WTC11 (cell line): ENCODE measurements at regions of chr1 and their contacts with region 1.

Region 1: DNA sequence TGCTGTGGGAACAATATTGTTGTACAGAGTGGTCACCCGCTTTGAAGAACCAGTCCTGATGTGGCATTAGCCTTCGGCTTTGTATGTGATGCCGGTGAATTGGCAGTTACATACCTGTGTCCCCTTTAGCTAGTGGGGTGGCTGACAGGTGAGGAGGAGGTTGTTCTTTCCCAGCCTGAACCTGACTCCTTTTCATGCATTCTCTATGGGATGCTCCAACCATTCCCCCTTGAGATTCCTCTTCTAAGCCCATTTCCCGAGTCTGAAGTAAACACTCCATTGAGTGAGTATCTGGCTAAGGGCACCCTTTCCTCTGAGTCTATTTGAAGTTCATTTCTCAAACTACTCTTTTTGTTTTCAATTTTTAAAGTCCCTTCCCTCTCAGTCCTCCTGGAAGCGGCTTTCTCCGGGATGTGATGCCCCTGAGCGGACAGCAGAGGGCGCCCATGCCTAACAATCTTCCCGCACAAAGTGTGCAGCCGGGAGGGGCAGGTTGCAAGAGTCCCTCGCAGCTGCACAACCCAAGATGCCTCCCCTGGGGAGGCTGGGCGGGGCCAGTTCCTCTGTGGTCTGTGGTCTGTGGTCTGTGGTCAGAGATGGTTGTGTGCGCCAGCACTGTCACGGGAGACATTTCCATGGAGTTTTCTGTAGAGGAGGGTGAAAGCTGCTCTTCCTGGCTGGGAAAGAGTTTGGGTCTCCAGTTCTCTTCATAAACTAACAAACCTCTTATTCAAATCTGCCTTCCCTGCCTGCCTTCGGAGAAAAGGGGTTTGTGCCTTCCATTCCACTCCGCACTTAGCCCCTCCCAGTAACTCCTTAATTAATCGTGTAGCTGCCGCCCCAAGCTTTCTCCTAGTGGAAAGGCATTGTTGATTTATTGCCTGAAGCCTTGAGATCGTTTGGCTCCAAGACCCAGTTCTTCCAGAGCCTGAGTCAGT is 36.4 kb upstream of the LMX1A start:
- DNase-seq: peak; percentile 84
- ATAC-seq: peak; percentile 99
- H3K4me3 Mint-ChIP-seq: peak overlapping the region; percentile 64
- H3K27ac Mint-ChIP-seq: no peak overlapping the region
- H3K4me1 Mint-ChIP-seq: peaks cover 7% of the 10 kb centered on the region
- H3K27me3 Mint-ChIP-seq: peaks cover 24% of the 10 kb centered on the region
- CTCF ChIP-seq: peak; percentile 87

Region 2: GRCh38 chr1:165288350-165289148 is 104.4 kb before region 1 on chr1:
- CTCF ChIA-PET with region 1: no interaction called
- POLR2A ChIA-PET with region 1: no interaction called
- DNase-seq: no peak
- ATAC-seq: peak; percentile 40
- H3K4me3 Mint-ChIP-seq: no peak overlapping the region
- H3K27ac Mint-ChIP-seq: no peak overlapping the region
- H3K4me1 Mint-ChIP-seq: peaks cover 16% of the 10 kb centered on the region
- H3K27me3 Mint-ChIP-seq: no peaks in the 10 kb centered on the region; the same call in 1 of the 2 replicates
- CTCF ChIP-seq: no peak

Region 3: DNA sequence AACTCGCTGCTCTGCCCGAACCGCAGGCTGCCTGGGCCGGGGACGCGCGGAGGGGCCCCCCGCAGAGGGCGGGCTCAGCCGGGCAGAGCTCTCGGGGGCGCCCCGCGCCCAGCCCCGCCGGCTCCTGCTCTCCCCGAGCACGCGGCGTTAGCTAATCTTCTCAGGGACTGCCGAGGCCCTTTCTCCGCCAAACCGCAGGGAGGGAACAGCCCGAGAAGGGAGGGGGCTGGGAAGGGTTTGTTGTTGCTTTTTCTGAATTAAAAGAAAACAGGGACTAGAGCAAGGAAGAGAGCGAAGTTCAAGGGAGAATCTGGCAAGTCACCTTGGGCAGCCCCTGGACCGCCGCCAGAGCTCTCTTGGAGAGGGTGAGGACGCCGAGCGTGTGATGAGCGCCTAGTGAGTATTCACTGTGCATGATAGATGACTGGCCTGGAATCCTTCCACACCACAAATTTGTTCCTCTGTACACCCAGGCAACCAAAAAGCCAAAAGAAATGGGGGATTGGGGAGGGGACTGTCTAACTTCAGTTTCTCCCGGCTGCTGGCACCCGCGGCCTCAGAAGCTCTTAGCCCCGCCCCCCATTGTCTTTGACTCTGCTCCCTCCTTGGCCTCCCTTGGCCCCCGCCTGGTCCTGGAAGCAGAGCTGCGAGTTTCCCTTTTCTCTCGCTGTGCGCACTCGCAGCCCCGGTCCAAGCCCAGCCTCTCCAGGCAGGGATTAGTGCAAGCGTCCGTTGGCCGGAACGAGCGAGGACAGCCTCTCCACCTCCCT is 16.7 kb before region 1 on chr1:
- CTCF ChIA-PET with region 1: interaction called, 15 read pairs
- POLR2A ChIA-PET with region 1: no interaction called
- DNase-seq: peak; percentile 79
- ATAC-seq: peak; percentile 92
- H3K4me3 Mint-ChIP-seq: peak overlapping the region; percentile 76
- H3K27ac Mint-ChIP-seq: no peak overlapping the region
- H3K4me1 Mint-ChIP-seq: peaks cover 13% of the 10 kb centered on the region
- H3K27me3 Mint-ChIP-seq: peaks cover 74% of the 10 kb centered on the region
- CTCF ChIP-seq: no peak